Heart left ventricle (tissue), 16 donors: ENCODE measurements at regions of chr18 and their contacts with region 1.

Region 1: DNA sequence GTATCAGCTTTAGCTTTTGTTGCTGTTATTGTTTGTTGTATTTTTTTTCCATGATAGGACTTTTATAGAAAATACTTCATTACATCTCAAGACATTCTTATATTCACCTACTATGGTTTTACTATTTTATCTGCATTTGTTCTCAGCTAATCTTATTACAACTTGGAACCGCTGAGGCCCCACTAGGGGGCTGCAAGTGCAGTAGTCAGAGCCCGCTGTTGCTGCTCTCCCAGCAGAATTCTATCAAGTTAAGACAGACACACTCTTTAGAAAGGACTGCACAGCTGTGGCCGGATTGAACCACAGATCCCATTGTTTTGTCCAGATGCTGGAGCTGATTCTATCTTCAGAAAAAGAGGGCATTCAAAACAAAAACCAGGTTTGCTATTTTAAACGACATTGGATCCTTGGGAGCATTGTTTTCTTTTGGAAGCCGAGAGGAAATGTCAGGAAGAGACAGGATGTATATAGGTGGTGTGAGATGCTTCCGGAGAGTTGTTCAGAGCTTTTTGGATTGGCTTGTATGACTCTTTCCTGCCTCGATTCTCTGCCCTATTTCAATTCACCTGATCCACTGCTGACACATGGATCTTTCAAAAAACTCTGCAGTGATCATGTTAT is 105.7 kb upstream of the GAREM1 start:
- DNase-seq: no peak
- ATAC-seq: peak in 1 of 4 donors; percentile 42
- H3K4me3 ChIP-seq: no peak overlapping the region
- H3K27ac ChIP-seq: no peak overlapping the region
- H3K4me1 ChIP-seq: peaks cover 0 to 5% (median 0%) of the 10 kb centered on the region in 12 donors
- H3K27me3 ChIP-seq: peaks cover 0 to 12% (median 0%) of the 10 kb centered on the region in 9 donors
- CTCF ChIP-seq: peak in 8 of 12 donors; percentile 6 to 45 (median 19)
- POLR2A ChIP-seq: no peak

Region 2: GRCh38 chr18:32530947-32531651 is 45.3 kb before region 1 on chr18:
- intact Hi-C with region 1: loop called in 1 of 10 experiments (anchors 2 kb)
- DNase-seq: no peak
- ATAC-seq: no peak
- H3K4me3 ChIP-seq: no peak overlapping the region
- H3K27ac ChIP-seq: no peak overlapping the region
- H3K4me1 ChIP-seq: no peaks in the 10 kb centered on the region
- H3K27me3 ChIP-seq: no peaks in the 10 kb centered on the region
- CTCF ChIP-seq: no peak
- POLR2A ChIP-seq: no peak